Right ventricle myocardium superior (tissue), 1 donor: ENCODE measurements at regions of chr1 and their contacts with region 1.

Region 1: DNA sequence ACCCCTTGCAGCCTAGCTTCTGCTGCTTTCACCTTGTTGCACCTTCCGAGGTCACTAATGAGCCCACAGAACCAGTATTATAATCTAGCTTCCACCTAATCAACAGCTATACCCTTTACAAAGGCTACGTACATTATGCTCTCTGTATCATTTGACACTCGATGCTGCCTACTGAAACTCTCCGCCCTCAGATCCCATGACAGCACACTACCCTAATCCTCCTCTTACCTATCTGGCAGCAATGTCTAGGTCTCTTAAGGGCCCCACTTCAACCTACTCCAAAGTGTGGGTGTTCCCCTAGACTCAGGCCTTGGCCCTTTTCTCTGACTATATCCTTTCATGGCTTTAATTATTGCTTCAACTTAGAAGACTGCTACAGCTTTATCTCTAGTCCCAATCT is 4.8 kb upstream of the MRPS21 start:
- DNase-seq: no peak
- ATAC-seq: no peak

Region 2: GRCh38 chr1:150249936-150250335 is 38.9 kb before region 1 on chr1:
- intact Hi-C with region 1: loop called (anchors 5 kb)
- DNase-seq: no peak
- ATAC-seq: no peak

Region 3: DNA sequence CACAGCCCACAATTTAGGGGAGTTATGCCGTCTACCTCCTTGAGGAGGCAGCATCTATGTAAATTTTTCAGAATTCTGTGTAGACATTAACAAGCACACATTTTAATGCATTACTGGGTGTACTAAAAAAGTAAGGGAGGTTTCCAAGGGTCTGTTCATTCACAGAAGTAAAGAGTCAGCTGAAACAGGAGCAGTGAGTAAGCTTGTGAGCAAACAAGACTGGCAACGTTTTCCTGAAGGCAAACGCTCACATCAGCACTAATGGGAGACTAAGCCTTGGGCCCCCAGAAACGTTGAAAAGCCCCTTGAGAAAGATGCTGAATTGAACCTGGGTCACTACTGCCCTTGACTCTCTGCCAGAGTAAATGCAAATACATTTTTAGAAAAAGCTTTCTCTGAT is 100.8 kb after region 1 on chr1:
- intact Hi-C with region 1: no loop called
- DNase-seq: no peak
- ATAC-seq: no peak